Activated CD8-positive, alpha-beta memory T cell treated with anti-CD3 and anti-CD28 coated beads, Interleukin-2, amount 10 ng/mL, durations not matched to agents 7 days and 5 days (primary cell): ENCODE measurements at regions of chr1 and their contacts with region 1.

Region 1: DNA sequence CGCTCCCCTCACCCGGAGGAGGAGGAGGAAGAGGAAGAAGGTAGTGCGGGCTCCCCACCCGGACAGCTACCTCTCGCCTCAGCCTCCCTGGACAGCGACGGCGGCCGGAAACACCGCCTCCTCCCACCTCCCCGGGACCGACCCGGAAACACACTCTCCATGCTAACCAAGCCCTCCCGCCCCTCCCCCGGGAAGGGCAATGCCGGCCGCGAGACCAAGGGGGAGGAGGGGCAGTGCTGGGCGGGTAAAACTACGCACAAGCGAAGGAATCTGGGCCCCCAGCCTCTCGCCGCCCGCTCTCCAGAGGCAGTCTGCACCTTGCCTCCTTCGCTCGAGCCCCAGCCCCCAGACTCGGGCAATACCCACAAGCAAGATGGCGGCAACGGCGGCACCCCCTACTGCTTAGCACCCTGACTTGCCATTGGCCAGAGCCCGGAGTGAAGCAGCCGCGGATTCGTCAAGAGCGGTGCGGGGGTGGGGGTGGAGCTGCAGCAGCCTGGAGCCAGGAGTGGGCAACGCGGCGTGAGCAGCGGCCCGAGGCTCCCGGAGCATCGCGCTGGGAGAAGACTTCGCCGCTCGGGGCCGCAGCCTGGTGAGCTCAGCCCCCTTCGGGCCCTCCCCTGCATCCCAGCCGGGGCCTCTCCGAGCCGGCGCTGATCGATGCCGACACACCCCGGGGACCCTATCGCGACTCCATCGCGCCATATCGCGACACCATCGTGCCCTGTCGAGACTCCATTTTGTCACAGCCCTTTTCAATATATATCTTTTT is at the starts of genes KIAA0319L and NCDN:
- DNase-seq: peak; percentile 99
- ATAC-seq: peak; percentile 94
- H3K4me3 Mint-ChIP-seq: peak within 1 kb of the TSS; percentile 93
- H3K27ac Mint-ChIP-seq: peak within 1 kb of the TSS; percentile 95
- H3K4me1 Mint-ChIP-seq: peaks cover 34% of the 10 kb centered on the region
- H3K27me3 Mint-ChIP-seq: no peaks in the 10 kb centered on the region
- total RNA-seq, gene KIAA0319L: 36.0 to 45.7 TPM
- total RNA-seq, gene NCDN: 20.1 to 31.7 TPM

Region 2: DNA sequence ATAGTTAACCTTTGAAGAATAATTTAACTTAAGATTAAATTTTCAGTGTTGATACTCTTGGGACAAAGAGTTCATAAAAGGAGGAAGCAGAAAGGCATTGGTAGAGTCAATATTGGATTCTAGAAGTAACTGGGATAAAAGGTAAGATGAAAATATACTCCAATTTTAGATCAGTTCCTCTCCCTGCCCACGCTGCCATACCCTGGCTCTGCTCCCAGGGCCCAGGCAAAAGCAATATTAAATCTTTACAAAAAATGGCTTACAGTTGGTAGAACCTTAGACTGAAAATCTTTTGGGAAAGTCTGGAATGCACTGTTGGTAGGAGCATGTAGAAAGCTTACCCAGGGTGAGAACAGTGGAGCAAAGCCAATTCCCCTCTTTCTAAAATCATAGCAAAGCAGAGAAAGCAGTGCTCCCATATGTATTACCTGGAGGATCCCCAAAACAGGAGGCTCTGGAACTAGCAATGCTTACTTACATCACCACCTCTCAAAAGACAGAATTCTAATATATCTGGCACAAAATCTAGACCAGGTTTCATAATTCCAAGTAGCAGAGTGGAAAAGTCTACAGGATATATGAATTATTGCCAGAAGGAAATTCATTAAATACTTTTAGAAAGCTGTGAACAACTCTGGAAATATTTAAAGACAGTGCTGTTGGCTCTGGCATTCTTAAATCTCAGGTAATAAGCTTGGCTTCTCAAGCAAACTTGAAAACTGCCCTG is 24.8 kb before region 1 on chr1:
- CTCF ChIA-PET with region 1: no interaction called
- DNase-seq: no peak
- ATAC-seq: no peak
- H3K4me3 Mint-ChIP-seq: no peak overlapping the region
- H3K27ac Mint-ChIP-seq: no peak overlapping the region
- H3K4me1 Mint-ChIP-seq: peaks cover 17% of the 10 kb centered on the region
- H3K27me3 Mint-ChIP-seq: no peaks in the 10 kb centered on the region

Region 3: GRCh38 chr1:35577071-35577998 is 19.9 kb after region 1 on chr1:
- CTCF ChIA-PET with region 1: interaction called, 13 read pairs
- DNase-seq: peak; percentile 91
- ATAC-seq: peak; percentile 91
- H3K4me3 Mint-ChIP-seq: peak overlapping the region; percentile 77
- H3K27ac Mint-ChIP-seq: peak overlapping the region; percentile 86
- H3K4me1 Mint-ChIP-seq: peaks cover 30% of the 10 kb centered on the region
- H3K27me3 Mint-ChIP-seq: peaks cover 29% of the 10 kb centered on the region